ENCODE measurements at regions of chr5 and their contacts with region 1.

Region 1: GRCh38 chr5:16465544-16466466 is at the start of gene ZNF622:
- DNase-seq: peak; percentile 97
- H3K4me3 Mint-ChIP-seq: peak within 1 kb of the TSS; percentile 99
- H3K27ac Mint-ChIP-seq: peak within 1 kb of the TSS; percentile 95
- H3K4me1 Mint-ChIP-seq: peaks cover 54% of the 10 kb centered on the region
- H3K27me3 Mint-ChIP-seq: no peaks in the 10 kb centered on the region
- total RNA-seq, gene ZNF622: 40.7 and 43.0 TPM in 2 replicates

Region 2: GRCh38 chr5:14595189-14595588 is 1870.6 kb before region 1 on chr5:
- intact Hi-C with region 1: loop called (anchors 10 kb)
- DNase-seq: peak; percentile 89
- H3K4me3 Mint-ChIP-seq: peak overlapping the region; percentile 78
- H3K27ac Mint-ChIP-seq: peak overlapping the region; percentile 94
- H3K4me1 Mint-ChIP-seq: peaks cover 78% of the 10 kb centered on the region
- H3K27me3 Mint-ChIP-seq: no peaks in the 10 kb centered on the region

Region 3: GRCh38 chr5:15338546-15338945 is 1127.3 kb before region 1 on chr5:
- intact Hi-C with region 1: no loop called
- DNase-seq: no peak
- H3K4me3 Mint-ChIP-seq: no peak overlapping the region
- H3K27ac Mint-ChIP-seq: no peak overlapping the region
- H3K4me1 Mint-ChIP-seq: no peaks in the 10 kb centered on the region
- H3K27me3 Mint-ChIP-seq: no peaks in the 10 kb centered on the region

Region 4: GRCh38 chr5:16480821-16481538 is 15.2 kb after region 1 on chr5:
- intact Hi-C with region 1: no loop called
- DNase-seq: no peak
- H3K4me3 Mint-ChIP-seq: no peak overlapping the region
- H3K27ac Mint-ChIP-seq: no peak overlapping the region
- H3K4me1 Mint-ChIP-seq: peaks cover 3% of the 10 kb centered on the region
- H3K27me3 Mint-ChIP-seq: no peaks in the 10 kb centered on the region

Region 5: GRCh38 chr5:16508730-16509531 is 43.1 kb after region 1 on chr5:
- intact Hi-C with region 1: no loop called
- DNase-seq: no peak
- H3K4me3 Mint-ChIP-seq: no peak overlapping the region
- H3K27ac Mint-ChIP-seq: no peak overlapping the region
- H3K4me1 Mint-ChIP-seq: no peaks in the 10 kb centered on the region
- H3K27me3 Mint-ChIP-seq: no peaks in the 10 kb centered on the region

Region 6: DNA sequence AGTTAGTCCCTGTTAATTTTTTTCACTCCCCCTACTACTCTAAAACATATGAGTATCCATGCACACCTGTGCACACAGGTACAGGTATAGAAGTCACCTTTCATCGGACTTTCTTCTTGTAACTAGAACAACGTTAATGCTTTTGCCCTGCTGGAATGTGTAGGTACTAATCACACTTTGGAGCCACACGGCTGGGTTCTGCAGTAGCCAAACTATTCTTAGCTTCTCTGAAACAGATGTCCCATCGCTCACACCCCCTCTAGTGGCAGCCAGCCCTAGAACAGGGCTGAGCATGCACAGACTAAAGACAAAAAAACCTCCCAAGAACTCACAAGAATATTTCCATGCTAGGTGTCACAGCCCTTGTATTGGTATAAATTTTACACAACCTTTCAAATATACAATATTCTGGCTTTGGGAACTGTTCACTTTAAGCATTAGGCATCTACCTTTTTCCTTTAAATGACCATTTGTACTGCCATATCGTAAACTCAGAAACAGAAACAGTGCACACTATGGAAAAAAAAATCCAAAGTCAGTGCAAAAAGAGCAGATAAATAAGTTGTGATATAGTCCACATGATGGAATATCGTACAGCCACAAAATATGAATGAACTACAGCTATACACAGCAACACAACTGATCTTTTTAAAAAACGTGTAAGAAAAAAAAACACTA is 87.0 kb after region 1 on chr5:
- intact Hi-C with region 1: loop called (anchors 5 kb)
- DNase-seq: peak; percentile 84
- H3K4me3 Mint-ChIP-seq: no peak overlapping the region
- H3K27ac Mint-ChIP-seq: no peak overlapping the region
- H3K4me1 Mint-ChIP-seq: peaks cover 15% of the 10 kb centered on the region
- H3K27me3 Mint-ChIP-seq: no peaks in the 10 kb centered on the region

Measured in activated CD4-positive, alpha-beta T cell treated with anti-CD3 and anti-CD28 coated beads, Interleukin-2, amount 10 ng/mL, durations not matched to agents 24 days and 14 days (primary cell).